Activated T-helper 2 cell treated with anti-CD3 and anti-CD28 coated beads, Interferon-gamma antibody, Interleukin-2, Interleukin-4, amounts not matched to agents 10 μg/mL and 5 μg/mL and 100 μg/mL, durations not matched to agents 14 hours and 24 hours and 36 hours (primary cell): ENCODE measurements at regions of chr5 and their contacts with region 1.

Region 1: DNA sequence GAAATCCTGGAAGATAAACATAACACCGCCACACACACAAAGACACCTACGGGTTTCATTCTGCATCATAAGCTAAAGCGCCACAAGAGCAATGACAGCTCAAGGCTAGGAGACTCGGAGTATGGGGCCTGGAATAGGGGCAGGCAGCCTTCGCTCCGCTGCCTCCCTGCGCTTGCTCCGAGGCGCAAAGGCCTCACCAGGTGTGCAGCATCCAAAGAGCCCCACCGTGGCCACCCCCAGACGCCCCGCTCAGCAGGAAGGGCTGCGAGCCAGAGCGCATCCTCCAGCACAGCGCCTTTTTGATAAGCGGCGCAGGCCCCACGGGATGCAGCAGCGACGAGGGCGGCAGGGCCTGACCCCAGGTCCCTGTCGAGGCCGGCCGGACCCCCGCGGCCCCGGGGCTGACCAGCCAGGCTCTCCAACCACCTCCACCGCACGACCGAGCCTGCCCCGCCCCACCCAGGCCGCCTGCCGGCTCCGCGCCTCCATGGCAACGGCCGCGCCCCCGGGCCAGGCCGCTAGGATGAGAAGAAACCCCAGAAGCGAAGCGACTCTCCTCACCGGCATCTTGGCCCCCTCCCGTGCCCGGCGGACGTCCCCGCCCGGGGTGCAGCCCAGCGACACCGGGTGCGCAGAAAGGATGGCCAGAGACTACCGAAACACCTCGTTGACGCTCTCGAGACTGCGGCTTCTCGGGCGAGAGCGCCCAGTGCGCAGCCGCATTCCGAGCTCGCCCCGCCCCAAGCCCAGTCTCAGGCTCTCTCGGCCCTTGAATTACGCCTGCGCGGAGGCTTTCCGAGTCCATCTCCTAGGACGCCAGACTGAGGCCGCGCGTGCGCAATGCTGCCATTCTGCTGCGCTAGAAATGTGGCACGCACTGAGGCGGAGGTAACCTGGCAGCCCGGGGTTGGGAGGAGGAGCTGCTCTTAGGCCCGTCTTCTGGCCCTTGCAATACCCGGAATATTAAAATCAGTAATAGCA is at the start of gene KIF3A:
- DNase-seq: peak; percentile 98
- H3K4me3 Mint-ChIP-seq: peak within 1 kb of the TSS; percentile 85
- H3K27ac Mint-ChIP-seq: peak within 1 kb of the TSS; percentile 86
- H3K4me1 Mint-ChIP-seq: peaks cover 36% of the 10 kb centered on the region
- H3K27me3 Mint-ChIP-seq: peaks cover 14% of the 10 kb centered on the region
- total RNA-seq, gene KIF3A: 40.7 and 41.4 TPM in 2 replicates

Region 2: GRCh38 chr5:132386644-132387286 is 350.4 kb before region 1 on chr5:
- intact Hi-C with region 1: loop called (anchors 5 kb)
- DNase-seq: peak; percentile 73
- H3K4me3 Mint-ChIP-seq: no peak overlapping the region
- H3K27ac Mint-ChIP-seq: peak overlapping the region; percentile 24
- H3K4me1 Mint-ChIP-seq: peaks cover 42% of the 10 kb centered on the region
- H3K27me3 Mint-ChIP-seq: no peaks in the 10 kb centered on the region

Region 3: GRCh38 chr5:132410451-132411381 is 326.4 kb before region 1 on chr5:
- intact Hi-C with region 1: loop called (anchors 10 kb)
- DNase-seq: peak; percentile 88
- H3K4me3 Mint-ChIP-seq: peak overlapping the region; percentile 98
- H3K27ac Mint-ChIP-seq: peak overlapping the region; percentile 99
- H3K4me1 Mint-ChIP-seq: peaks cover 54% of the 10 kb centered on the region
- H3K27me3 Mint-ChIP-seq: peaks cover under 1% of the 10 kb centered on the region

Region 4: DNA sequence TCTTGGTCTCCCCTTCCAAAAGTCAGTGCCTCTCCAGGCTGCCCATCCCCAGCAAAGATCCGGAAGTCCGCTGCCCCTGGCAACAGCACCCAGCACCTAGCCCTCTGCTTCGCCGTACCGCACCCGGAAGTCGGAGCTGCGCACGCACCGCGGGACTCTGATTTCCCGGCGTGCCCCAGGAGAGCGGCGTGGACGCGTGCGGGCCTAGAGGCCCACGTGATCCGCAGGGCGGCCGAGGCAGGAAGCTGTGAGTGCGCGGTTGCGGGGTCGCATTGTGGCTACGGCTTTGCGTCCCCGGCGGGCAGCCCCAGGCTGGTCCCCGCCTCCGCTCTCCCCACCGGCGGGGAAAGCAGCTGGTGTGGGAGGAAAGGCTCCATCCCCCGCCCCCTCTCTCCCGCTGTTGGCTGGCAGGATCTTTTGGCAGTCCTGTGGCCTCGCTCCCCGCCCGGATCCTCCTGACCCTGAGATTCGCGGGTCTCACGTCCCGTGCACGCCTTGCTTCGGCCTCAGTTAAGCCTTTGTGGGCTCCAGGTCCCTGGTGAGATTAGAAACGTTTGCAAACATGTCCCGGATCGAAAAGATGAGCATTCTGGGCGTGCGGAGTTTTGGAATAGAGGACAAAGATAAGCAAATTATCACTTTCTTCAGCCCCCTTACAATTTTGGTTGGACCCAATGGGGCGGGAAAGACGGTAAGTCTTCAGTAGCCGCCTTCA is 180.2 kb before region 1 on chr5 and contains the start of gene RAD50:
- intact Hi-C with region 1: loop called (anchors 5 kb)
- DNase-seq: peak; percentile 92
- H3K4me3 Mint-ChIP-seq: peak within 1 kb of the TSS; percentile 89
- H3K27ac Mint-ChIP-seq: peak within 1 kb of the TSS; percentile 93
- H3K4me1 Mint-ChIP-seq: peaks cover 33% of the 10 kb centered on the region
- H3K27me3 Mint-ChIP-seq: no peaks in the 10 kb centered on the region
- total RNA-seq, gene RAD50: 49.2 and 55.8 TPM in 2 replicates

Region 5: GRCh38 chr5:132655821-132656773 is 81.0 kb before region 1 on chr5:
- intact Hi-C with region 1: loop called (anchors 2 kb)
- DNase-seq: no peak
- H3K4me3 Mint-ChIP-seq: peak overlapping the region; percentile 67
- H3K27ac Mint-ChIP-seq: peak overlapping the region; percentile 65
- H3K4me1 Mint-ChIP-seq: peaks cover 52% of the 10 kb centered on the region
- H3K27me3 Mint-ChIP-seq: peaks cover 12% of the 10 kb centered on the region

Region 6: DNA sequence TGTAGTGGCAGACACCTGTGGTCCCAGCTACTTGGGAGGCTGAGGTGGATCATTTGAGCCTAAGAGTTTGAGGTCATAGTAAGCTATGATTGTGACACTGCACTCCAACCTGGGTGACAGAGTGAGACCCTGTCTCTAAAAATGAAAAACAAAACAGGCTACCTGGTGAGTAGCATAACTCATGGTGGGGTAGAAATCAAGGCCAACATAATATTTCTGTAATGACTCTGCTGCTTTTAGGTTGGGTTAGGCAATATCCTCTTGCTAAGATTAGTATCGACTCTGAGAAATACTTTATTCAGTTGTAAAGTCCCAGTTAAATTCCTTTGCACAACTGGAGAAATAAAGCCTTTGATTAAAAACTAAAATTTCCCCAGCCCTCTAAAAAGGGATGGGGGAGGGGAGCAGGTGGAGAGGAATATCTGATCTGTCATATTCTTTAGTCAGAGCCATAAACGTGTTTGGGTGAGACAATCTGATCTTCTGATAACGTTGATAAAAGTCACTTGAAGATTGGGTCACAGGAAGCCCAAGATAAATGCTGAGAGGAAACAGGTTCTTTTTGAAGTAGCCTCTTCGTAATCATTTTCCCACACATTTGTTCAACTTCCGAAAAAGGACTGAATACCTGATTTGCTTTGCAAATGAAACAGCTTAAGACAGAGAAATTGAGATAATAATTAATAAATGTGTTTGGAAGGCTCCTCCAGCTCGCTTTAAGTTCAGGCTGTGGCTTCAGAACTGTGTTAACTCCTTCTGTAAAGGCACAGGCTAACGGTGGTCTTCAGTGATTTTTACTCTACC is 48.4 kb before region 1 on chr5:
- intact Hi-C with region 1: loop called (anchors 2 kb)
- DNase-seq: no peak
- H3K4me3 Mint-ChIP-seq: no peak overlapping the region
- H3K27ac Mint-ChIP-seq: peak overlapping the region; percentile 68
- H3K4me1 Mint-ChIP-seq: peaks cover 45% of the 10 kb centered on the region
- H3K27me3 Mint-ChIP-seq: peaks cover 1% of the 10 kb centered on the region

Region 7: DNA sequence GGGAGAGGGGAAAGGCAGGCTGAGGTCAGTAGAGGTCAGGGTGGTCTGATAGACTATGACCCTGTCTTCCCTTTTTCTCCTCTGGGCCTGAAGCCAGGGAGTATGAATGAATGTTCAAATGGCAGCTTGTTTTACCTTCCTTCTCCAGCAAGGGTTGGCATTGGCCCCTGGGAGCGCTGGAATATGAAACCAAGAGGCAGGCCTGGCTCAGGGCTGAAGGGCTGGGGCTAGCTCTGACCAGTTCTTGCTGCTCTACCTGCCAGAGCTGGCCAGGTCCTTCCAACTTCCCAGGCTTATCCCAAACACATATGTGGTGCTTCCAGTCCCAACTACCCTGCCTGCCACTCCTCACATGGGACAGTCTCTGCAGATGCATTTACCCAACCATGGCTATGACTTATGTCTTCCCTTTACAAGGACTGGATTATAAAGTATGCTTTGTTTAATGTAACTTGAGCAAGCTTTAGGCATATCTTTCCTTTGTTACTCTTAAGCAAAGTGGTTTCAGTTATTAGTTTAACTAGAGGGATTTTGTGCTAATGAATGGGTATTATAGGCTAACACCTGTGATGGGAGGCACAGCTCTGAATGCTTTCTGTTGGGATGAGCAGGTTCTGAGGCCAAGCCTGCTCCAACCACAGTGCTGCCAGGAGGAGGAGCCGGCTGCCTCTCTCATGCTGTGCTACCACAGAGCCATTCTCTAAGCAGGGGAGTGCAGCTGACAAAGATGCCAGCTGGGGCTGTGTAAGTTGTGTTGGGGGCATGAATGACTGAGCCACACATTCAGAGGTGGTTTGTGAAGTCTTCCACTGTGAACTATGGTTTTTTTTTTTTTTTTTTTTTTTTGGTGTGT is 16.2 kb after region 1 on chr5:
- intact Hi-C with region 1: loop called (anchors 1 kb)
- DNase-seq: no peak
- H3K4me3 Mint-ChIP-seq: no peak overlapping the region
- H3K27ac Mint-ChIP-seq: peak overlapping the region; percentile 5
- H3K4me1 Mint-ChIP-seq: peaks cover 42% of the 10 kb centered on the region
- H3K27me3 Mint-ChIP-seq: peaks cover 4% of the 10 kb centered on the region